PC-3 (cell line): ENCODE measurements at regions of chr3 and their contacts with region 1.

Region 1: DNA sequence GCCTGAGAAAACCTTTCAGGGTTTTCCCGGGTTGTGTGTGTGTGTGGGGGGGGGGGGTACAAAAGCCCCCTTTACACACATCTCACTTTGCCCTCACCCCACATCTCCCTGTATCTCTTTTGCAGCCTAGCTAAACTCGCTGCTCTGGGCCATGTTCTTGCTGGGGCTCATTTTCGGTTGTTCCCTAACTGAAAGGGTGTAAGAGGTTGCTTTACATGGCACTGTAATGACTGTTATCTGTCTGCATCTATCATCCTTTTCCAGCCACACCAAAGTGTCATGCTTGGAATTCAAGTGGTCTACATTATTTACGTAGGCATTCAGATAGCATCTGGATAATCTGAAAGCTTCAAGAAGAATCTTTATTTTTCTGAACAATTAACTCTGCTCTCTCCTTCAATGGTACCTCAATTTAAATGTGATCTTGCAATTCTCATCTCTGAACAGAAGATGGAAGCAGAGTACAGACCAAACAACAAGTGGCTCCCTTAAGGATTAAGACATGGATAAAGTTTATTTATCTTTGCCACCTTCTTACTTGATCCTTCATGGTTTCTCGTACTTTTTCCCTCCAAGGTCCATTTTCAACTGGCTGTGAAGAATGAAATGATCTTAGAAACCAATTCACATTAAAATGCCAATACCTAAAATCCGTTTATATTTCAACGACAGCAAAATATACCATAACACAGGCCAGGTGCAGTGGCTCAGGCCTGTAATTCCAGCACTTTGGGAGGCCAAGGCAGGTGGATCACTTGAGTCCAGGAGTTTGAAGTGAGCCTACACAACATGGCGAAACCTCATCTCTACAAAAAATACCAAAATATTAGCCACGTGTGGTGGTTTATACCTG is 34.9 kb downstream of the DCLK3 start:
- DNase-seq: peak; percentile 73
- ATAC-seq: peak; percentile 78
- H3K4me3 ChIP-seq: no peak overlapping the region
- H3K27ac ChIP-seq: no peak overlapping the region
- H3K4me1 ChIP-seq: no peaks in the 10 kb centered on the region
- H3K27me3 ChIP-seq: peaks cover 26% of the 10 kb centered on the region
- CTCF ChIP-seq: peak; percentile 86

Region 2: GRCh38 chr3:36833160-36833828 is 103.9 kb after region 1 on chr3:
- CTCF ChIA-PET with region 1: no interaction called
- POLR2A ChIA-PET with region 1: no interaction called
- intact Hi-C with region 1: no loop called
- DNase-seq: no peak
- ATAC-seq: no peak
- H3K4me3 ChIP-seq: no peak overlapping the region
- H3K27ac ChIP-seq: no peak overlapping the region
- H3K4me1 ChIP-seq: no peaks in the 10 kb centered on the region
- H3K27me3 ChIP-seq: no peaks in the 10 kb centered on the region
- CTCF ChIP-seq: no peak

Region 3: GRCh38 chr3:36843065-36844051 is 113.9 kb after region 1 on chr3:
- CTCF ChIA-PET with region 1: no interaction called
- POLR2A ChIA-PET with region 1: no interaction called
- intact Hi-C with region 1: loop called (anchors 1 kb)
- DNase-seq: peak; percentile 56
- ATAC-seq: peak; percentile 77
- H3K4me3 ChIP-seq: no peak overlapping the region
- H3K27ac ChIP-seq: no peak overlapping the region
- H3K4me1 ChIP-seq: no peaks in the 10 kb centered on the region
- H3K27me3 ChIP-seq: no peaks in the 10 kb centered on the region
- CTCF ChIP-seq: peak; percentile 71

Region 4: GRCh38 chr3:36868614-36869436 is 139.4 kb after region 1 on chr3:
- CTCF ChIA-PET with region 1: no interaction called
- POLR2A ChIA-PET with region 1: no interaction called
- intact Hi-C with region 1: loop called (anchors 1 kb)
- DNase-seq: peak; percentile 73
- ATAC-seq: peak; percentile 79
- H3K4me3 ChIP-seq: no peak overlapping the region
- H3K27ac ChIP-seq: no peak overlapping the region
- H3K4me1 ChIP-seq: no peaks in the 10 kb centered on the region
- H3K27me3 ChIP-seq: no peaks in the 10 kb centered on the region
- CTCF ChIP-seq: peak; percentile 86

Region 5: GRCh38 chr3:36957862-36958686 is 228.6 kb after region 1 on chr3:
- CTCF ChIA-PET with region 1: no interaction called
- POLR2A ChIA-PET with region 1: no interaction called
- intact Hi-C with region 1: loop called (anchors 1 kb)
- DNase-seq: peak; percentile 84
- ATAC-seq: peak; percentile 69
- H3K4me3 ChIP-seq: peak overlapping the region; percentile 53; the same call in 1 of the 2 replicates
- H3K27ac ChIP-seq: peak overlapping the region; percentile 77
- H3K4me1 ChIP-seq: peaks cover 35% of the 10 kb centered on the region
- H3K27me3 ChIP-seq: no peaks in the 10 kb centered on the region
- CTCF ChIP-seq: no peak

Region 6: GRCh38 chr3:37210230-37210629 is 480.8 kb after region 1 on chr3:
- CTCF ChIA-PET with region 1: no interaction called
- POLR2A ChIA-PET with region 1: no interaction called
- intact Hi-C with region 1: loop called (anchors 2 kb)
- DNase-seq: no peak
- ATAC-seq: no peak
- H3K4me3 ChIP-seq: no peak overlapping the region
- H3K27ac ChIP-seq: no peak overlapping the region
- H3K4me1 ChIP-seq: no peaks in the 10 kb centered on the region; the same call in 1 of the 2 replicates
- H3K27me3 ChIP-seq: no peaks in the 10 kb centered on the region
- CTCF ChIP-seq: no peak

Region 7: GRCh38 chr3:37779289-37780152 is 1050.1 kb after region 1 on chr3:
- CTCF ChIA-PET with region 1: no interaction called
- POLR2A ChIA-PET with region 1: no interaction called
- intact Hi-C with region 1: loop called (anchors 1 kb)
- DNase-seq: peak; percentile 84
- ATAC-seq: peak; percentile 93
- H3K4me3 ChIP-seq: no peak overlapping the region
- H3K27ac ChIP-seq: no peak overlapping the region
- H3K4me1 ChIP-seq: no peaks in the 10 kb centered on the region
- H3K27me3 ChIP-seq: peaks cover 38% of the 10 kb centered on the region
- CTCF ChIP-seq: peak; percentile 87